ENCODE measurements at regions of chr20 and their contacts with region 1.

Region 1: DNA sequence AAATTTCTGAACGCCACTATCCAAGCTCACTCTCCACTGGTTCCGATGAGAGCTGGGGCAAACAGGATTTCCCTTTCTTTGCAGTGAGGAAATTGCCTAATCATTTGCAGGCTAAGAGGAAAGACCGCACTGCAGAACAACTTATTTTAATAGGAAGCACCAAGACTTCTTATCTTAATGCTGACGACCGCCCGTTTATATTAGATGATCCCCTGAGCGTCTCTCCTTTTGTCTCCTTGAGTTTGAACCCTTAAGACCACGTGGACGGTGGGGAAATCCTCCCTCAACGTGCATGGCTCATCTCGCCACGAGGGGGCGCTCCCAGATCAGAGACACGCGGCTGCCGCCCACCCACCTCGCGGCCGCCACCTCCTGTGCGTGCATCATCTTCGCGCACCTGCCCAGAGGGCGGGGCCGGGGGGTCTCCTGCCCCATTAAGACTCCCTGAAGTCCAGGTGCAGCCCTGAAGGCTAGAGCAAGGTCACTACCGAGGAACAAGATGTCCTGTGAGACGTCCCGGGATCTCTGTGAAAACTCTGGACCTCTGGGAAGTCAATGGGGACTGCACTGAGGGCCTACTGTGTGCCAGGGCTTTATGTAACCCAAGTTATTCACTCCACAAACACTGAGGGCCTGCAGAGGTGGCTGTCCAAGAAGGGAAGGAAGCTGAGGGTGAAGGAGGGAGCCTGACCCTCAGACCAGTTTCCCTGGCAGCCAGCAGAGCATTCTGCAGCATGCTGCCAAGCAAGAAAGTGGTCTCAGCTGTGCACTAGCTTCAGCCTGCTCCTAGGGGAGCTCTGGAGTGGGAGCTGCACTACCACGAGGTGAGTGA is 28.1 kb downstream of the PDYN start:
- DNase-seq: peak; percentile 78
- H3K4me3 ChIP-seq: peak overlapping the region; percentile 66
- H3K27ac ChIP-seq: no peak overlapping the region
- H3K4me1 ChIP-seq: peaks cover 3% of the 10 kb centered on the region; the same call in 1 of the 2 replicates
- H3K27me3 ChIP-seq: 0 out of 2 replicates have a peak, but pooled peaks cover 3% of the 10 kb centered on the region

Region 2: DNA sequence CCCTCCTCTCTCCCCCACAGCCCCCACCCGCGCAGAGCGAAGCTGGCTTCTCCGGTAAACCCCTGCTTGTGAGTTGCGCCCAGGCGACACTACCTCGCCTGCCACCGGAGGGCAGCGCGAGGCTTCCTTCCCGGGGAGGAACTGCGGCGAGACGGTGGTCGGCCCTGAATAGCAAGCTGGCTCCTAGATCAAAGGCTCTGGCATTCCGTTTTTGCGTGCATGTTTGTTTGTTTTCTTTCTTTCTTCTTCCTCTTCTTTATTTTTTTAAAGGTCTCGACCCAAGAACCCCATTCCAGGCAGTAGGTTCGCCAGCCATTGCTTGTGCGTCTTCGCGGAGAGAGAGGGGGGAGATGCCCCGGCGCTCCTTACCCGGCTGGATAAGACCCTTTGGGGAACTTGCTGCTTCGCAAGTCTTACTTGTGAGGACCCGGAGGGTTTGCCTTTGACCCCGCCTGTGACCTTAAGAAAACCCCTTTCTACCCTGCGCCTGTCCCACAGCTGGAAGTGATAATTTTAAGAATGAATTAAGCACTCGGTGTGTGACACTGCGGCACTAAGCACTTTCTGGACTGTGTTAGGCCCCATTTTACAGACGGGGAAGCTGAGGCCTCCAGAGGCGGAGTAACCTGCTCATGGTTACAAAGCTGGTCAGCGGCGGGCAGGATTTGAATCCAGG is 163.2 kb before region 1 on chr20:
- in situ Hi-C with region 1: no loop called
- DNase-seq: peak; percentile 88
- H3K4me3 ChIP-seq: peak overlapping the region; percentile 71
- H3K27ac ChIP-seq: peak overlapping the region; percentile 55
- H3K4me1 ChIP-seq: peaks cover 13% of the 10 kb centered on the region
- H3K27me3 ChIP-seq: no peaks in the 10 kb centered on the region

Region 3: DNA sequence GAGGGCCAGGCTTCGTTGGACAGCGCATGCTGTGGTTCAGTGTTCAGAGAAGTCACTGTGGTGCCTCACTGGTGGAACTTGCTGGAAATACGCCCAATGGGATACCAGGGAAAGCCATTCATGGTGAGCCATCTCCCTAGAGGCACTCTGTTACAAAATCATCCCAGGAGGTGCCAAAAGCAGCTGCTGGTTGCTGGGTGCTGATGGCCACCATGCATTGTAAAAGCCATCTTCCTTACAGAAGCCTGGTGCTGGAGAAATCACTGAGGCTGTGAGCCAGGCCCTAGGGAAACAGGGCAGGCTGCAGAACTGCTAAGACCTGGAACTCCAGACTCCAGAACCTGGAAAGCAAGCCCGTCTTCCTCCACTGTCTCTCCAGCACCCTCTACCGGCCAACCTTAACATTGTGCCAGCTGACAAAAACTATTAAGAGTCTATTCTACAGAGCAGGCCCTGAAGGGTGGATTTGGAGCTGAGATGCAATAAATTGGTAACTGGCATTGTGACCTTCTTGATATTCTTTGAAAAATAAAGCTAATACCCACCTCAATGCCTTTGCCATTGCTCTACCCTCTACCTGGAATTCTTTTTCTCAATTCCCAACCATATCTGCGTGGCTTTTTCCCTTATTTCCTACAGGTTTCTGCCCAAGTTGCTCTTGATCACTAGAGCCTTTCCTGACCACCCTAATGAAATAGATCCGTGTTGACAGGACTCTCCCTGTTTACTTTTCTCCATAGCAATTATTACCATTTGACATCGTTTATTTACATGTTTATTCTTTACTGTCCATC is 486.4 kb after region 1 on chr20:
- in situ Hi-C with region 1: loop called (anchors 10 kb)
- DNase-seq: peak; percentile 83
- H3K4me3 ChIP-seq: no peak overlapping the region
- H3K27ac ChIP-seq: no peak overlapping the region
- H3K4me1 ChIP-seq: peaks cover 10% of the 10 kb centered on the region; the same call in 1 of the 2 replicates
- H3K27me3 ChIP-seq: no peaks in the 10 kb centered on the region